AG04450 (cell line): ENCODE measurements at regions of chr11 and their contacts with region 1.

Region 1: GRCh38 chr11:132312701-132313111 is 942.3 kb downstream of the NTM start:
- DNase-seq: no peak
- H3K4me3 ChIP-seq: no peak overlapping the region
- H3K27ac ChIP-seq: no peak overlapping the region
- H3K27me3 ChIP-seq: no peaks in the 10 kb centered on the region
- CTCF ChIP-seq: peak; percentile 69

Region 2: DNA sequence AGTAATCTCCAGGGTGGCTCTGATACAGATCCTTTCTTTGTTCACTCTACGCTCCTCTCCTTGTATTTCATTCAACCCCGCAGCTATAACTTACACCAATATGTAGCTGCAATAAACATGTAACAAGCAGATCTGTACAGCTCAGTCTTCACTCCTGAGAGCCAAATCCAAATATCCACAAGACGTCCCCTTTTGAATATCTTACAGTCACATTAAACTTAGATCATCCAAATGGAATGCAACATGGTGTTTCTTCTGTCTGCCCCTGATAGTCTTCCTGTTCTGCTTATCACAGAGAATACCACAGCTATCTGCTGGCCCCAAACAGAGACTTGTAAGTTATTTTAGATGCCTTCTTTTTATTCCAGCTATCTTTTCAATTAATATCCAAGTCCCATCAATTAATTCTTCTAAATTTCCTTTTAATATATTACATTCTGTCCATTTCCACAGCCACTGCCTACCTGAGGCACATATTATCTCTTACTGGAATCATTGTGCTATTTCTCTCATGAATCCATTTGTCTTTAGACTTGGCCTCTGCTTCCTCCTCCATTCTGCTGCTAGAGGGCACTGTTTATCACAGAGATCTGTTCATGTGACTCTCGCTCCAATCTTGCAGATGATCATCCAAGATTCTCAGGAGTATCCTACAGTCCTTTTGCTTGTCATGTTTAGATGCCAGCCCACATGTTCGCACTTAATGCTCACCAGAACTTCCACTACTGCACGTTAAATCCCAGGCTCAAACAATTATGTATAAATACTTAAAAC is 33.7 kb before region 1 on chr11:
- CTCF ChIA-PET with region 1: interaction called, 27 read pairs
- POLR2A ChIA-PET with region 1: no interaction called
- DNase-seq: peak; percentile 15
- H3K4me3 ChIP-seq: no peak overlapping the region
- H3K27ac ChIP-seq: no peak overlapping the region
- H3K27me3 ChIP-seq: no peaks in the 10 kb centered on the region
- CTCF ChIP-seq: peak; percentile 58

Region 3: DNA sequence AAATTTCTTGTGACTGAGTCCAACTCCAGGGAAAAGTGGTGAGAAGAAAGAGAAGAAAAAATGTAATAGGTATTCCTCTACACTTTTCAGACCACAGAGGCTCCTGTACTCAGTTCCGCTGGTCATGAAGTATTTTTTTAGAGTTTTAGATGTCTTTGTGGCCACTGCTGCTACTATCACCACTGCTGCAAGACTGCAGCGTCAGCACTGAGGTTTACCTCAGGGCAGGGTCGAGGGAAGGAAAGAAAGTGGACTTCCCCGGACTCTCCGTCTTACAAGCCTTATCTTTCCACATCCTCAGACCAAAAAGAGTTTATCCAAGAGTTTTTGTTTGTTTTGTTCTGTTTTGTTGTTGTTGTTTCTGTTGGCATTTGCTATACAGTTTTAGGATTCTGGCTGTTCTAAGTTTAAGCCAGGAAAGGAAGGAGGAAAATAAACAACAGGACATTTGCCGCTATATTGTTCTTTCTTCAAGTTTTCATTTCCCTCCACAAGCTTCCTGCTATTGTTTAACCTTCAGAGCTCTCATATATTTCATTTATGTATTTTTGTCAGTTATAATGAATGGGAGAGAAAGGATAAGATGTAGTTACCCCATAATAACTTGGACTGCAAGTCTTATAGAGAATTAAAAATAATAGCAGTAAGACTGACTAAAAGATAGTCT is 23.0 kb before region 1 on chr11:
- CTCF ChIA-PET with region 1: interaction called, 10 read pairs
- POLR2A ChIA-PET with region 1: no interaction called
- DNase-seq: no peak
- H3K4me3 ChIP-seq: no peak overlapping the region
- H3K27ac ChIP-seq: no peak overlapping the region
- H3K27me3 ChIP-seq: no peaks in the 10 kb centered on the region
- CTCF ChIP-seq: no peak

Region 4: GRCh38 chr11:132300283-132300682 is 12.4 kb before region 1 on chr11:
- CTCF ChIA-PET with region 1: interaction called, 60 read pairs
- POLR2A ChIA-PET with region 1: no interaction called
- DNase-seq: no peak
- H3K4me3 ChIP-seq: no peak overlapping the region
- H3K27ac ChIP-seq: no peak overlapping the region
- H3K27me3 ChIP-seq: no peaks in the 10 kb centered on the region
- CTCF ChIP-seq: peak; percentile 49

Region 5: DNA sequence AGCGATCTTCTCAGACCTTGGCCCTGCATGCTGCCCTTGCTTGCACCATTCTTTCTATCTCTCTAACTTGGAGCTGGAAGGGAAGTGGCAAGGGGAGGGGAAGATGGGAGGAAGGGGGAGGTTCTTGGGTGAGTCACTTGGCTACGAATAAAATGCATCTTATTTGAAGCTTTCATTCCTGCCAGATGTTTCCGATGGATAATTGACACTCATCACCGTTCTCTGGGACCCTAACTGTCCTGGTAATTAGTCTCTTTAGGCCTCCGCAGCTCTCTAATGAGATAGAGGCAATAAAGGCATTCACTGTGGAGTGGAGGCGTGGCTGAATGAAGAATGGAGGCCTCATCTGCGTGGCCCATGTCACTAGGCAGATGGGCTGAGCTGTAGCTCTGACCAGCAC is 17.8 kb after region 1 on chr11:
- CTCF ChIA-PET with region 1: interaction called, 14 read pairs
- POLR2A ChIA-PET with region 1: no interaction called
- DNase-seq: no peak
- H3K4me3 ChIP-seq: no peak overlapping the region
- H3K27ac ChIP-seq: no peak overlapping the region
- H3K27me3 ChIP-seq: no peaks in the 10 kb centered on the region
- CTCF ChIP-seq: no peak

Region 6: DNA sequence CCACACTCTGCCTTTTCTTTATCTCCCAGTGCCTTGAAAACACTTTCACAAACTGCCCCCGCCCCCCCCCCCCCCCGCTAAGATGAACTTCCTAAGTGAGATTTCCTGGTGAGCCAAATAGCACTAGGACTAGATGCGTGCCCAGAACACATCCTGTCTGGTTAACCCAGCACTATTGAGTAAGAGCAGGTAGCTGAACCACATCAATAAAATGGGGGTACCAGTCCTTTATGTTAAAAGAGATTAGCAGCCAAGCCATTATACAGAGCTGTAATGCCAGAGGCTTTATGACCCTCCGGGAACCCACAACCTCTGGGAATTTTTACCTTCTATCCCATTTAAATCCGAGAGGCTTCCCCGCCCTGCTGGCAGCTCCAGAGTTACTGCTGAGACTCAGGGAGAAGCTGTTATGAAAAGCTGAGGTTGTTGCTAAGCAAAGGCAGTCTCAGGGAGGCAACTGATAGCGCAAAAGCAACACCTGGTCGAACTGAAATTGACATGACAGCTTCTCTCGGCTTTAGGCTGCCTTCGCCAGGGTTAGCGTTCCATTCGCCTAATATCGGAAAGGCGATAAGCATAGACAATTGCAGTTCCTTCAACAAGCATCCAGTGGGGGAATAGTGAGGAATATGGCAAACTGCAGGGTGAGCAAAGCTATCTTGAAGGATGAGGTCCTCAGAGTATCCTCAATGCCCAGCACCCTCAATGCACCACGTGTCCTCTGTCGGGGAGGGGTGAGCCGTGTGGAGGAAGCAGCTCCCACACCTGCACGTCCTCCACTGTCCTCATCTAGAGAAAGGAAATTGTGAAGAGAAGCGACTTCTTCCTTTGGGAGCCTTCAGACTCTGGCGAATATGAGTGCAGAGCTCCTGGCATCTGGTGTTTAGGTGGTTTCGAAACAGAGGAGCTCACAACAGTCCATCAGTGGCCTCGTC is 34.7 kb after region 1 on chr11:
- CTCF ChIA-PET with region 1: no interaction called
- POLR2A ChIA-PET with region 1: no interaction called
- DNase-seq: no peak
- H3K4me3 ChIP-seq: no peak overlapping the region
- H3K27ac ChIP-seq: no peak overlapping the region
- H3K27me3 ChIP-seq: peaks cover 9% of the 10 kb centered on the region
- CTCF ChIP-seq: no peak